ENCODE measurements at regions of chr6 and their contacts with region 1.

Region 1: GRCh38 chr6:113306552-113307145 is 550.5 kb upstream of the MARCKS start:
- DNase-seq: peak; percentile 71
- ATAC-seq: peak; percentile 99
- H3K4me3 ChIP-seq: no peak overlapping the region
- H3K4me3 Mint-ChIP-seq: no peak overlapping the region
- H3K27ac ChIP-seq: no peak overlapping the region
- H3K27ac Mint-ChIP-seq: no peak overlapping the region
- H3K4me1 ChIP-seq: peaks cover 0 to 5% of the 10 kb centered on the region in 2 donors
- H3K4me1 Mint-ChIP-seq: peaks cover 8% of the 10 kb centered on the region
- H3K27me3 ChIP-seq: no peaks in the 10 kb centered on the region
- H3K27me3 Mint-ChIP-seq: no peaks in the 10 kb centered on the region
- CTCF ChIP-seq: peak; percentile 81

Region 2: DNA sequence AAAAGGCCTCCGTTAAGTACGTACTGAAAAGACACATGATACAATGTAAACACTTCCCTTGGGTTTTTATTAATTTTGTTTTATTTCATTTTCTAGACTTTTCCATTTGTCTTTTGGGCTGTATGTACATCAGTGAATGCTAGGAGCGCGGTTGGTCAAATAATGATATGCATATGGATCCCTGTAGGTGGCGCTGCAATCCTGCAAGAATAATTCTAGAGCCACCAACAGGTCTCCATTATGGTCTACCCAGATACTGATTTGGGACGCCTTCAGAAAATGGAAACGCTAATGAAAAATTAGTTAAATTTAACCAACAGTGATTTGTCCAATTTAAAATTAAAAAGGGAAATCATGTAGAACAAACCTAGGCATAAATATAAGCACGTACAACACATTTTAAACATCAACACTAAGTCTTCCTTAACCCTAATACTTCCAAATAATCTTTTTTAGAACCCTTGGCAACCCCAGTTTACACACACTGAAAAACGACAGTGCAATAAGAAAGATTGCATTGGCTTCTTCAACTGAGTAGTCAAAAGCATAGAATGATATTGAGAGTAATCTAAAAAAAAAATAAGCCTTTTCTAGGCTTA is 526.1 kb before region 1 on chr6:
- CTCF ChIA-PET with region 1: interaction called, 6 read pairs
- POLR2A ChIA-PET with region 1: no interaction called
- intact Hi-C with region 1: loop called (anchors 1 kb)
- DNase-seq: peak; percentile 78
- ATAC-seq: peak; percentile 86
- H3K4me3 ChIP-seq: no peak overlapping the region
- H3K4me3 Mint-ChIP-seq: no peak overlapping the region
- H3K27ac ChIP-seq: no peak overlapping the region
- H3K27ac Mint-ChIP-seq: no peak overlapping the region
- H3K4me1 ChIP-seq: no peaks in the 10 kb centered on the region
- H3K4me1 Mint-ChIP-seq: no peaks in the 10 kb centered on the region
- H3K27me3 ChIP-seq: no peaks in the 10 kb centered on the region
- H3K27me3 Mint-ChIP-seq: no peaks in the 10 kb centered on the region
- CTCF ChIP-seq: peak; percentile 91

Region 3: GRCh38 chr6:113755449-113756289 is 449.0 kb after region 1 on chr6:
- CTCF ChIA-PET with region 1: no interaction called
- POLR2A ChIA-PET with region 1: no interaction called
- intact Hi-C with region 1: loop called (anchors 5 kb)
- DNase-seq: peak; percentile 27
- ATAC-seq: peak; percentile 64
- H3K4me3 ChIP-seq: no peak overlapping the region
- H3K4me3 Mint-ChIP-seq: peak overlapping the region; percentile 64
- H3K27ac ChIP-seq: no peak overlapping the region
- H3K27ac Mint-ChIP-seq: peak overlapping the region; percentile 71
- H3K4me1 ChIP-seq: peaks cover 15 to 17% of the 10 kb centered on the region in 2 donors
- H3K4me1 Mint-ChIP-seq: peaks cover 45% of the 10 kb centered on the region
- H3K27me3 ChIP-seq: no peaks in the 10 kb centered on the region
- H3K27me3 Mint-ChIP-seq: no peaks in the 10 kb centered on the region
- CTCF ChIP-seq: no peak

Region 4: DNA sequence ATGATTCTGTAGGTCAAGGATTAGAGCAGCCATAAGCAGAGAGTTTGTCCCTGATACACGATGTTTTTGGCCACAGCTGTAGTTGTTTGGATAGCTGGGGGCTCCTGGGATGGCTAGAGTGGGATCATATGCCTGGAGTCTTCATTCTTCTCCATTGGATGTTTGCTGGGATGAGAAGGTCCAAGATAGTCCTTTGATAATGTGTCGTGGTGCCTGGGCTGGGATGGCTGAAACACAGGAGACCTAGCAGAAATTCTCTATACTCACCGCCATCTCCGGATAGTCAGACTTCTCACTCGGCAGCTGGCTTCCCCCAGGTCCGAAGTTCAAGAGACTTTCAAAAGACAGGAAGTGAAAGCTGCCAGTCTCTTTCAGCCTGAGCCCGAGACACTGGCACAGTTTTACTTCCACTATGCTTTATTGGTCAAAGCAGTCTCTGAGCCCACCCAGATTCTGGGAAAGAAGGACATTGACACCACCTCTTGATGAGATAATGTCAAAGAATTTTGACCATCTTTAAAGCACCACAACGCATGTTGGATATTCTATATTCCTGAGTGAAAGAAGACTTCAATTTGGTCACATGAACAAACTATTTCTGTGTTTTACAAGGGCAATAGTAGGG is 566.5 kb after region 1 on chr6:
- CTCF ChIA-PET with region 1: interaction called, 52 read pairs
- POLR2A ChIA-PET with region 1: no interaction called
- intact Hi-C with region 1: no loop called
- DNase-seq: peak; percentile 77
- ATAC-seq: peak; percentile 98
- H3K4me3 ChIP-seq: peak overlapping the region in 4 of 5 experiments; percentile 16 to 61 (median 42)
- H3K4me3 Mint-ChIP-seq: peak overlapping the region; percentile 93
- H3K27ac ChIP-seq: peak overlapping the region in 1 of 2 donors; percentile 55
- H3K27ac Mint-ChIP-seq: peak overlapping the region; percentile 90
- H3K4me1 ChIP-seq: peaks cover 7 to 8% of the 10 kb centered on the region in 2 donors
- H3K4me1 Mint-ChIP-seq: peaks cover 14% of the 10 kb centered on the region
- H3K27me3 ChIP-seq: no peaks in the 10 kb centered on the region
- H3K27me3 Mint-ChIP-seq: no peaks in the 10 kb centered on the region
- CTCF ChIP-seq: no peak

Region 5: GRCh38 chr6:113909234-113909856 is 602.7 kb after region 1 on chr6:
- CTCF ChIA-PET with region 1: interaction called, 32 read pairs
- POLR2A ChIA-PET with region 1: no interaction called
- intact Hi-C with region 1: no loop called
- DNase-seq: peak; percentile 72
- ATAC-seq: peak; percentile 57
- H3K4me3 ChIP-seq: no peak overlapping the region
- H3K4me3 Mint-ChIP-seq: no peak overlapping the region
- H3K27ac ChIP-seq: no peak overlapping the region
- H3K27ac Mint-ChIP-seq: no peak overlapping the region
- H3K4me1 ChIP-seq: no peaks in the 10 kb centered on the region
- H3K4me1 Mint-ChIP-seq: peaks cover 2% of the 10 kb centered on the region
- H3K27me3 ChIP-seq: no peaks in the 10 kb centered on the region
- H3K27me3 Mint-ChIP-seq: no peaks in the 10 kb centered on the region
- CTCF ChIP-seq: peak; percentile 97